Dendritic cell treated with granulocyte-macrophage colony-stimulating factor and Interleukin-4, amounts not matched to agents 40 ng/mL and 50 ng/mL, for 4 days (primary cell): ENCODE measurements at regions of chr7 and their contacts with region 1.

Region 1: DNA sequence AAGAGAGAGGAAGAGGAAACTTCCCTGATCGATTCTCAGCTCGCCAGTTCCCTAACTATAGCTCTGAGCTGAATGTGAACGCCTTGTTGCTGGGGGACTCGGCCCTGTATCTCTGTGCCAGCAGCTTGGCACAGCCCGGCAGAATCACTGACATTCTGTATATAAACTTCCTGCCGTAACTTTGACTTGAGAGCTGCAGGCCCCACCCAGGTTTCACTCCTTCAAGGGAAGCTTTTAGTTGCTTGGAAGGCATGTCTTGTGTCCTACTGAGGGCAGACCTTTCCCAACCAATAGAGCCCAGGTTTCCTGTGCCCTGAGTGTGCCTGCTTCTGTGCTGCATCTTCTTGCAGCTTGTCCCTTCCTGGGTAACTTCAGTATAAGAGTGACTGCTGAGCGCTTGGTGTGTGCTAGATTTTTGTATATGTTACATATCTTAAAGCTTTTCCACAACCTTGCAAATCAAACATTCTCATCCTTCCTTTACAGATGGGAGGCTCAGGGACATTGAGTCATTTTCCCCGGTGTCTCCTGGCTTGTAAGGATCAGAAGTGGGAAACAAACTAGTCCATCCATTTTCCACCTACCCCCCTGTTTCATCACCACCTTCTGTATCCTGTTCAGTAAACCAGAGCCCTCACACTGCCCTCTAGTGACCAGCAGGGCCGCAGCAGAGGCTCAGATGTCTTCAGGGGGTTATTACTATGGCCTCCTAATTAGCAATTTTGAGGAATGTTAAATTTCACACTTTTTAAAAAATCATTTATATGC is 225.2 kb upstream of the PRSS58 start:
- H3K4me3 Mint-ChIP-seq: no peak overlapping the region
- H3K27ac Mint-ChIP-seq: no peak overlapping the region
- H3K4me1 Mint-ChIP-seq: peaks cover 58% of the 10 kb centered on the region
- H3K27me3 Mint-ChIP-seq: peaks cover 4% of the 10 kb centered on the region

Region 2: DNA sequence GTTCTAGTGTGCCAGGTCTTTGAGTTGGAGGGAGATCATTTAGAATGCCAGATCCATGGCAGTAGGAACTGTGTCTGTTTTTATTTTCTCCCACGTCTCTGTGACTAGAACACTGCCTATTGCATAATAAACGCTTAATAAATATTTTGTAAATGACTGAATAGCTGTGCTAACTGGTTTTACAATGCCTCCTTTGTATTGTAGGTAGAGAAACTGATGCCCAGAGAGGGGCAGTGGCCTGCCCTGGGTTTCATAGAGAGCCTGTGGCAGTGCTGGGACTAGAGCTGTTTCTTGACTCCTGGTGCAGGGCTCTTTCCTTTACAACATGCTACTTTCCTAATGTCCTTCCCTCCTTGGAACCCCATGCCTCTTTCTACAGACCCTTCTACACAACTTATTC is 690.5 kb before region 1 on chr7:
- intact Hi-C with region 1: no loop called
- H3K4me3 Mint-ChIP-seq: no peak overlapping the region
- H3K27ac Mint-ChIP-seq: no peak overlapping the region
- H3K4me1 Mint-ChIP-seq: peaks cover 5% of the 10 kb centered on the region
- H3K27me3 Mint-ChIP-seq: no peaks in the 10 kb centered on the region

Region 3: GRCh38 chr7:142158736-142159496 is 324.2 kb before region 1 on chr7:
- intact Hi-C with region 1: no loop called
- H3K4me3 Mint-ChIP-seq: no peak overlapping the region
- H3K27ac Mint-ChIP-seq: no peak overlapping the region
- H3K4me1 Mint-ChIP-seq: no peaks in the 10 kb centered on the region
- H3K27me3 Mint-ChIP-seq: peaks cover 2% of the 10 kb centered on the region

Region 4: DNA sequence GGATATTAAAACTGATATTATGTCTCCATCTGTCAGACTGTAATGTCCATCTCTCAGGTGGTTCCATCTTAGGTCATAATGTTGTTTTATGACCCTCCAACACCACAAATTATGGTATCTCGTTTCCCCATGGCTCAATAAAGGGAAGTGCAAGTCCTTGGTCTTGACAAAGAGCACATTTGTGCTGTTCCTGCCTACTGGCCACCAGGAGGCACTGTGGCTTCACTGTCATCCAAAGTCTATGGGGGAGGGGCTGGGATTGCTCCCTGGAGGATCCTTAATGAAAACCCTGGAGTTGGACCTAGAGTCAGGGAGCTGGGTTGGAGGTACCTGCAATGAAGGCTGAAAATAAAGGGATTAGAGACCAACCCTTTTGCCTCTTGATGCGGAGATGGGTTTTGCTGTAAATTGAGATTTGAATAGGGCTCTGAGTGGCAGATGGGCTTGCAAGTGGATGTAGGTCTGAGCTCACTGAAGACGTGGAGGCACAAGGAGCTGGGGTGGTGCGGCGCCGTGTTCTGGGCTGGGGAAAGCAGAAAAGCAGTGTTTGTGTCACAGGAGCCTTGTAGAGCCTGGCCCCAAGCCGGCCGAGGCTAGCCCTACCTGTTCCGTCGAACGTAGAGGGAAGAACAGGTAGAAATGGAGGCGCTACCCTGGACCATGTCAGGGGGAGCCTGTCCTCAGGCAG is 44.7 kb before region 1 on chr7:
- intact Hi-C with region 1: loop called (anchors 10 kb)
- H3K4me3 Mint-ChIP-seq: no peak overlapping the region
- H3K27ac Mint-ChIP-seq: peak overlapping the region; percentile 14
- H3K4me1 Mint-ChIP-seq: peaks cover 56% of the 10 kb centered on the region
- H3K27me3 Mint-ChIP-seq: no peaks in the 10 kb centered on the region